ENCODE measurements at regions of chr17 and their contacts with region 1.

Region 1: DNA sequence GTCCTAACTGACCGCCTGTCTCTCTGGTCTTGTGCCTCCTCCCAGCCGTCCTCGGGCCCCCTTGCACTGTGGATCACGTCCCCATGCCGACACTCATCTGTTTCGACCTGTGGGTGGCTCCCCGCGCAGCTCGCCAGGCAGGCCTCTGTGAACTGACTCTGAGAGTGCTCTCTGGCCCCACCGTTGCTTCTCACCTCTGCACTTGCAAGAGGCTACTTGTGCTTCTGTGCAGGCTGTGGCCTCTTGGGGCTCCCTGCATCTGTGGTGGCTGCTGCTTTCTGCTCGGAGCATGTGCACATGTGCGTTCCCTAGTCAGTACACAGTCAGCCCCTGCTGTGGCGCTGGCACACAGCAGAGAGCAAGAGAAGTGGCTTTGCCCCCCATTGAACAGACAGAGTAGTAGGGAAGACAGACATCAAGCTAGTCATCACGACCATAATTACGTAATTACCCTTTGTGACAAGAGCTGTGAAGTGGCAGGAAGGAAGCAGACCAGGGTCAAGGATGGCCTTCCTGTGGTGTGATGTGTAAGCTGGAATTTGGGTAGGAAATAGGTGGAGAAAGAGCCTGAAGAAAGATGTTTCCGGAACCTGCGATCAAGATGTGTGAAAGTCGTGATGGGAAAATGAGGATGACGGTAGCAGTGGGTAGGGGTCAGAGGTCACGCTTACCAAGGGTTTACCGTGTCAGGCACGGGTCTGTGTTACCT is 256.0 kb upstream of the CACNG5 start:
- DNase-seq: no peak
- ATAC-seq: no peak
- H3K4me3 ChIP-seq: no peak overlapping the region
- H3K27ac ChIP-seq: peak overlapping the region in 1 of 12 donors; percentile 8
- H3K4me1 ChIP-seq: peaks cover 0 to 38% (median 13%) of the 10 kb centered on the region in 12 donors
- H3K27me3 ChIP-seq: no peaks in the 10 kb centered on the region
- CTCF ChIP-seq: no peak
- POLR2A ChIP-seq: no peak

Region 2: GRCh38 chr17:66200685-66201092 is 378.2 kb before region 1 on chr17:
- intact Hi-C with region 1: loop called in 1 of 10 experiments (anchors 10 kb)
- DNase-seq: peak in 3 of 5 donors; percentile 14 to 42 (median 36)
- ATAC-seq: peak in 2 of 4 donors; percentile 18 to 46
- H3K4me3 ChIP-seq: no peak overlapping the region
- H3K27ac ChIP-seq: no peak overlapping the region
- H3K4me1 ChIP-seq: no peaks in the 10 kb centered on the region
- H3K27me3 ChIP-seq: no peaks in the 10 kb centered on the region
- CTCF ChIP-seq: peak; percentile 32 to 63 (median 46)
- POLR2A ChIP-seq: no peak

Region 3: DNA sequence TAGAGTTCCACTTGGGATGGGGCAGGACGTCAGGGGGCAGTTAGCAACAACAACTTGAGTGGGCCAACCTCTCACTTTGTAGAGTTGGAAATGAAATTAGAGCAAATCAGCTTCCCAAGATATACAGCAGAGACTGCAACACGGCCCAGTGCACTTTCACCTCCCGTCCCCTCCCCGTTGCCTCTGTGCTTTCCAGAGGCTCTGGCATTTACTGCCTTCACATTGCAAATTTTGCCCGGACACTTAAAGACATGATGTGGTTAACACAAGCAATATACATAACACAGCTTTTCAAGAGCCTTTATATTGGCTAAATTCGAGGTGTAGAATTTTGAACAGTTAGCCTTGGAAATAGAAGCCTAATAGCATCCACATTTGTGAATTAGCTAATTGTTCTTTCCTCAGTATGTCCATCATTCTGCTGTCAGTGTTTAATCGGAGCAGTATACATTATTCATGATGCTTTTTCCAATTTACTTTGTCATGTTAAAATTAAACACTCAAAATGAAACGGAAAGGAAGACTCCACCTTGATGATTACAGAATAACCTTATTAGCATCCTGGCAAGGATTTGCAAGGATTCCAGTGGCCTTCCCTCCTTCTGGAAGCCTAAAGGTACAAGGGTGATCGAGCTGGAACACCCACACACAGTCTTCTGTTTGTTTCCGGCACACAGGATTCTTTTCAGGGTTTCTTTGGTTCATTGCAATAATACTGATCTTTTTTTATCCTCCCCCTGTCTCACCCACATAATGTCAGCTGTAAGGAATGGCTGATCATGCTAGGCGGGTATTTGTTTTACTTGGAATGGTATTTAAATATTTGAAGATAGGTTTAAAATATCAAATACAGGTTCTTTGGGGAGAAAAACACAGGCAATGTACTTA is 65.1 kb after region 1 on chr17:
- intact Hi-C with region 1: no loop called
- DNase-seq: no peak
- ATAC-seq: no peak
- H3K4me3 ChIP-seq: no peak overlapping the region
- H3K27ac ChIP-seq: no peak overlapping the region
- H3K4me1 ChIP-seq: no peaks in the 10 kb centered on the region
- H3K27me3 ChIP-seq: no peaks in the 10 kb centered on the region
- CTCF ChIP-seq: no peak
- POLR2A ChIP-seq: no peak